PC-9 (cell line): ENCODE measurements at regions of chr1 and their contacts with region 1.

Region 1: GRCh38 chr1:31644560-31645273 is at the start of gene PEF1:
- DNase-seq: peak; percentile 98 to 99
- H3K4me3 ChIP-seq: peak within 1 kb of the TSS; percentile 76
- H3K27ac ChIP-seq: peak within 1 kb of the TSS; percentile 81
- H3K4me1 ChIP-seq: peaks cover 36% of the 10 kb centered on the region
- H3K27me3 ChIP-seq: no peaks in the 10 kb centered on the region
- CTCF ChIP-seq: no peak
- total RNA-seq, gene PEF1: 40.3 and 44.5 TPM in 2 replicates

Region 2: DNA sequence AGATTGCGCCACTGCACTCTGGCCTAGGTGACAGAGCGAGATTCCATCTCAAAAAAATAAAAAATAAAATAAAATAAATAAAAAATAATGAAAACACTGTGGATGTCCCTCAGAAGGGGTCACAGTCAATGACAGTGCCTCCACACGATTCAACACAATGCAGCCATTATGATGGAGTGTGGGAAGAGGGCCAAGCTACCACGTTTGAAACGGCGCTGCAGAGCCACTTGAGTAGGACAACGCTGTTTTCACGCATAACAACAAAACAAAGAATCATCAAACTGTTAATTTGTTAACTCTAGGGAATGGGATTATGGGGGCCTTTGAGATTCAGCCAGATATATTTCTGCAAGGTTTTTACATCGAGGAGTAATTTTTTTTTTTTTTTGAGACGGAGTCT is 441.5 kb before region 1 on chr1:
- CTCF ChIA-PET with region 1: no interaction called
- POLR2A ChIA-PET with region 1: no interaction called
- intact Hi-C with region 1: no loop called
- DNase-seq: no peak
- H3K4me3 ChIP-seq: no peak overlapping the region
- H3K27ac ChIP-seq: no peak overlapping the region
- H3K4me1 ChIP-seq: no peaks in the 10 kb centered on the region
- H3K27me3 ChIP-seq: no peaks in the 10 kb centered on the region
- CTCF ChIP-seq: no peak

Region 3: GRCh38 chr1:31296486-31297276 is 348.0 kb before region 1 on chr1 and contains the starts of genes SNRNP40 and ZCCHC17:
- CTCF ChIA-PET with region 1: no interaction called
- POLR2A ChIA-PET with region 1: interaction called, 16 read pairs
- intact Hi-C with region 1: no loop called
- DNase-seq: peak; percentile 92 to 97
- H3K4me3 ChIP-seq: peak within 1 kb of the TSS; percentile 72
- H3K27ac ChIP-seq: 0 out of 2 replicates have a peak within 1 kb of the TSS, but pooled peaks have one; percentile 24
- H3K4me1 ChIP-seq: peaks cover 9% of the 10 kb centered on the region; the same call in 1 of the 2 replicates
- H3K27me3 ChIP-seq: no peaks in the 10 kb centered on the region
- CTCF ChIP-seq: no peak
- total RNA-seq, gene SNRNP40: 56.0 and 59.5 TPM in 2 replicates
- total RNA-seq, gene ZCCHC17: 25.8 and 26.8 TPM in 2 replicates

Region 4: GRCh38 chr1:31576201-31576669 is 68.5 kb before region 1 on chr1 and contains the start of gene TINAGL1:
- CTCF ChIA-PET with region 1: no interaction called
- POLR2A ChIA-PET with region 1: no interaction called
- intact Hi-C with region 1: loop called (anchors 5 kb)
- DNase-seq: peak; percentile 89 to 98
- H3K4me3 ChIP-seq: peak within 1 kb of the TSS; percentile 70
- H3K27ac ChIP-seq: peak within 1 kb of the TSS; percentile 91
- H3K4me1 ChIP-seq: peaks cover 72% of the 10 kb centered on the region
- H3K27me3 ChIP-seq: no peaks in the 10 kb centered on the region
- CTCF ChIP-seq: no peak
- total RNA-seq, gene TINAGL1: 162 and 191 TPM in 2 replicates

Region 5: GRCh38 chr1:31904339-31905092 is 259.8 kb after region 1 on chr1:
- CTCF ChIA-PET with region 1: no interaction called
- POLR2A ChIA-PET with region 1: interaction called, 26 read pairs
- intact Hi-C with region 1: no loop called
- DNase-seq: peak in 1 of 2 experiments; percentile 54
- H3K4me3 ChIP-seq: no peak overlapping the region
- H3K27ac ChIP-seq: peak overlapping the region; percentile 9; the same call in 1 of the 2 replicates
- H3K4me1 ChIP-seq: no peaks in the 10 kb centered on the region
- H3K27me3 ChIP-seq: no peaks in the 10 kb centered on the region
- CTCF ChIP-seq: no peak

Region 6: DNA sequence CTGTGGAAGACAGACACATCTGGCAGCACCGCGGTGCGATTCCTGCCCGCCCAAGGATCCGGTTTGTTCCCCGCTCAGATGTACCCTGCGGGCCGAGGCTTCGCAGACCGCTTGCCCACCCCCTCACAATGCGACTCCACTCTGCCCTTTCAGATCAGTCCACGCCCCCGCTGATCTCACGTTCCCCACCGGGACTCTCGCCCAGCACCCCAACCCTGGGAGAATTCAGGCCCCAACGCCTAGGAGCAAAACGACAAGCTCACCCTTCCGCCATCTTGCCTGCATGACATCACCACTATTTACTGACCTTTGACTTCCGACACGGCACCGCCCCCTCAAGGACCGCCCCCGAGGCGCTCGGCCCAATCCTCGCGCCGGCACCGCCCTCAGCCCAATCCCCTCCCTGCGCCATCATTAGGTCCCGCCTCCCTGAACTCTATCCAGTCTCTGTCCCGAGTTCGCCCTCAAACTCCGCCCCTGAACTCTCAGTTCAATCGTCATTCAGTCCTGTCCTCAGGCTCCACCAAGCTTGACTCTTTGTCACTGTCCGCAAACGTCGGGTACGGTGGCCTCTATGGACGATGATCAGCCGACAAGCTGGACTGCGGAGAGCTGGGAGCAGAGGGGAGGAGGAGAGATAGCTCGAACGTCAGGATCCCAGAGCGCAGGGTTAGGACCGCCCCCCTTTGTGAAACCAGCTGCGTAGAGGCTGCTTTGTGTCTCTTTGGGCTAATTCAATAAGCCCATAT is 749.6 kb after region 1 on chr1 and contains the start of gene BSDC1:
- CTCF ChIA-PET with region 1: no interaction called
- POLR2A ChIA-PET with region 1: interaction called, 10 read pairs
- intact Hi-C with region 1: no loop called
- DNase-seq: peak; percentile 97 to 98
- H3K4me3 ChIP-seq: peak within 1 kb of the TSS; percentile 71
- H3K27ac ChIP-seq: peak within 1 kb of the TSS; percentile 59
- H3K4me1 ChIP-seq: peaks cover 22% of the 10 kb centered on the region
- H3K27me3 ChIP-seq: no peaks in the 10 kb centered on the region
- CTCF ChIP-seq: no peak
- total RNA-seq, gene BSDC1: 74.0 and 76.2 TPM in 2 replicates